ENCODE measurements at regions of chr6 and their contacts with region 1.

Region 1: GRCh38 chr6:97282726-97283617 is at the start of gene MMS22L:
- DNase-seq: peak; percentile 92 to 93 (median 93)
- H3K4me3 ChIP-seq: peak within 1 kb of the TSS; percentile 73 to 92
- H3K4me3 Mint-ChIP-seq: peak within 1 kb of the TSS; percentile 92 to 98 (median 96)
- H3K27ac ChIP-seq: peak within 1 kb of the TSS; percentile 64
- H3K27ac Mint-ChIP-seq: peak within 1 kb of the TSS; percentile 86 to 96 (median 92)
- H3K4me1 ChIP-seq: peaks cover 22% of the 10 kb centered on the region
- H3K4me1 Mint-ChIP-seq: peaks cover 16 to 37% (median 26%) of the 10 kb centered on the region in 4 donors
- H3K27me3 ChIP-seq: no peaks in the 10 kb centered on the region
- H3K27me3 Mint-ChIP-seq: no peaks in the 10 kb centered on the region
- total RNA-seq, gene MMS22L: 12.4 to 13.2 TPM

Region 2: GRCh38 chr6:95577304-95578105 is 1705.5 kb before region 1 on chr6 and contains the start of gene MANEA:
- CTCF ChIA-PET with region 1: no interaction called
- POLR2A ChIA-PET with region 1: interaction called, 5 read pairs
- intact Hi-C with region 1: loop called (anchors 1 kb)
- DNase-seq: peak; percentile 81 to 87 (median 82)
- H3K4me3 ChIP-seq: peak within 1 kb of the TSS; percentile 90 to 98
- H3K4me3 Mint-ChIP-seq: peak within 1 kb of the TSS; percentile 94 to 98 (median 97)
- H3K27ac ChIP-seq: peak within 1 kb of the TSS; percentile 86
- H3K27ac Mint-ChIP-seq: peak within 1 kb of the TSS; percentile 94 to 99 (median 97)
- H3K4me1 ChIP-seq: peaks cover 54% of the 10 kb centered on the region
- H3K4me1 Mint-ChIP-seq: peaks cover 32 to 70% (median 46%) of the 10 kb centered on the region in 4 donors
- H3K27me3 ChIP-seq: no peaks in the 10 kb centered on the region
- H3K27me3 Mint-ChIP-seq: no peaks in the 10 kb centered on the region
- total RNA-seq, gene MANEA: 12.2 to 13.0 TPM

Measured in CD4-positive, alpha-beta memory T cell (primary cell).